Activated T-helper 2 cell treated with anti-CD3 and anti-CD28 coated beads, Interferon-gamma antibody, Interleukin-2, Interleukin-4, amounts not matched to agents 10 μg/mL and 5 μg/mL and 100 μg/mL, durations not matched to agents 14 hours and 24 hours and 36 hours (primary cell): ENCODE measurements at regions of chr6 and their contacts with region 1.

Region 1: DNA sequence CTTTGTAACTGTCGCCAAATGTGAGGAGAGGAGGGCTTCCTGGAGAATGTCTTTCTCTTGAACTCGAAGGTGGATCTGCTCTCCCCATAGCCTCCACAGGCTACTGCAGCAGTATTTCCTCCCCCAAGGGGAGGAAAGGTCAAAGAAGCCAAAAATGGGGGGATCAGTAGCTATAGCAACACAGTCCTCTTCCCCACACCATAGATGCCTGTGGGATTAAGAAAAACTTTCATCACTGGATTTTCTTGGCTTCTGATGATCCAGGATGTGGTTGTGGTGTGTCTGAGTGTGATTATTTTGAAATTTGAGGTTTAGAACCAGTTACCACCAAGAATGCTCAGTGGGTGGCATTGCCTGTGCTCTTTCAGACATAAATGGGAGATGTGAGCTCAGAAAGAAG is 140.1 kb upstream of the SPACA1 start:
- DNase-seq: peak; percentile 22
- H3K4me3 Mint-ChIP-seq: no peak overlapping the region
- H3K27ac Mint-ChIP-seq: peak overlapping the region; percentile 64
- H3K4me1 Mint-ChIP-seq: peaks cover 61% of the 10 kb centered on the region
- H3K27me3 Mint-ChIP-seq: peaks cover 20% of the 10 kb centered on the region

Region 2: DNA sequence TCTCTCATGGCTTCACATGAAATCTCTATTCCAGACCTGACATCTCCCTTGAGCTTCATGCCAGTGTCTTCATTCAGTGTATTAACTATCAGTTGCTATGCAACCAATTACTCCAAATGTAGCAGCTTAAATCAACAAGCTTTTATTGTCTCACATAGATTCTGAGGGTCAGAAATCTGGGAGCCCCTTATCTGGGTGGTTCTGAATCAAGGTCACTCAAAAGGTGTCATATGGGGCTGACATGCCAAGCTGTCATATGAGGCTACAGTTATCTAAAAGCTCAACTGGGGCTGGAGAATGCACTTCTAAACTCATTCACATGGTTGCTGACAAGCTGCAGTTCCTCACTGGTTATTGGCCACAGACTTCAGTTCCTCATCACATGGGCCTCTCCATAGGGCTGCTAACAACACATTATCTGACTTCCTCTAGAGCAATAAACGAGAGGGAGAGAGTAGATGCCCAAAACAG is 805.3 kb before region 1 on chr6:
- intact Hi-C with region 1: loop called (anchors 10 kb)
- DNase-seq: no peak
- H3K4me3 Mint-ChIP-seq: no peak overlapping the region
- H3K27ac Mint-ChIP-seq: no peak overlapping the region
- H3K4me1 Mint-ChIP-seq: peaks cover 5% of the 10 kb centered on the region
- H3K27me3 Mint-ChIP-seq: peaks cover 39% of the 10 kb centered on the region

Region 3: GRCh38 chr6:87692086-87692485 is 215.4 kb before region 1 on chr6:
- intact Hi-C with region 1: no loop called
- DNase-seq: no peak
- H3K4me3 Mint-ChIP-seq: no peak overlapping the region
- H3K27ac Mint-ChIP-seq: no peak overlapping the region
- H3K4me1 Mint-ChIP-seq: peaks cover 21% of the 10 kb centered on the region
- H3K27me3 Mint-ChIP-seq: no peaks in the 10 kb centered on the region

Region 4: GRCh38 chr6:87738000-87738399 is 169.5 kb before region 1 on chr6:
- intact Hi-C with region 1: loop called (anchors 5 kb)
- DNase-seq: no peak
- H3K4me3 Mint-ChIP-seq: no peak overlapping the region
- H3K27ac Mint-ChIP-seq: no peak overlapping the region
- H3K4me1 Mint-ChIP-seq: peaks cover 31% of the 10 kb centered on the region
- H3K27me3 Mint-ChIP-seq: no peaks in the 10 kb centered on the region

Region 5: GRCh38 chr6:87832025-87832825 is 75.3 kb before region 1 on chr6:
- intact Hi-C with region 1: loop called (anchors 5 kb)
- DNase-seq: no peak
- H3K4me3 Mint-ChIP-seq: peak overlapping the region; percentile 59
- H3K27ac Mint-ChIP-seq: no peak overlapping the region
- H3K4me1 Mint-ChIP-seq: peaks cover 10% of the 10 kb centered on the region
- H3K27me3 Mint-ChIP-seq: peaks cover 7% of the 10 kb centered on the region

Region 6: GRCh38 chr6:87922947-87923330 is 15.4 kb after region 1 on chr6:
- intact Hi-C with region 1: loop called (anchors 2 kb)
- DNase-seq: no peak
- H3K4me3 Mint-ChIP-seq: no peak overlapping the region
- H3K27ac Mint-ChIP-seq: peak overlapping the region; percentile 27
- H3K4me1 Mint-ChIP-seq: peaks cover 22% of the 10 kb centered on the region
- H3K27me3 Mint-ChIP-seq: peaks cover 10% of the 10 kb centered on the region